Cardiac septum (tissue), 1 donor: ENCODE measurements at regions of chr17 and their contacts with region 1.

Region 1: DNA sequence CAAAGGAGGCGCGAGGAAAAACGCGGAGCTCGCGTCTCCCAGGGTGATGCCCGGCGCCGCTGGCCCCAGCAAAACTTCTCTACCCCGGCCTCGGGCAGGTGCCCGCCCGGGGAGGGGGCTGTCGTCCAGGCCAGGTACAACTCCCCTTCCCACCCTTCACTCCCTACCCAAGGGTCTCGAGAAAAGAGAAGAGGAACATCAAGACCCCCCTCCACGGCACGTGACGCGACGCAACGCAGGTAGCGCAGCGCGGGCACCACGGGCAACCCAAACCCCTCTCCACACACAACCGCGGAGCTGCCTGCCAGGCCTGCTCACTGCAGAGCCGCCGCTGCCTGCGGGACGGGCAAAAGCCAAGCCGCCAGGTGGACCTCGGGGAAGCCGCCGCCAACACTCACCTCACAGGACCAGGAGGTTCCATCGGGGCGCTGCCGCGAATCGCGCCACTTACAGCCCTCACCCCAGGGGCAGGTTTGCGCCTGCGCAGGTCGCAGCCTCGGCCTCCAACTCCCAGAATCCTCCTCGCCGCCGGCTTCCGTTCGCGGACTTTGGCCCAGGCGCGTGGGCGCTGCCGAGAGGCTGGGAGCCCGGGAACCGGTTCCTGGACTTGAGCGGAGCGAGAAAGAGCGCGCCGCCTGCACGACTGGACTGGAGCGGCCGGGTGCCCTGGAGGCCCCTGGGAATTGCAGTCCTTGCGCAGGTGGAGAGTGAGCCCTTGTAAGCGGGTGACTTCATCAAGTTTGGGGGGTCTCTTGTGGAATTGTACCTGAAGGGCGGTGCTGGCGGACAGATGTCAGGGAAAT is at the start of gene ZNF232:
- DNase-seq: peak; percentile 96
- total RNA-seq, gene ZNF232: 4.1 TPM

Region 2: DNA sequence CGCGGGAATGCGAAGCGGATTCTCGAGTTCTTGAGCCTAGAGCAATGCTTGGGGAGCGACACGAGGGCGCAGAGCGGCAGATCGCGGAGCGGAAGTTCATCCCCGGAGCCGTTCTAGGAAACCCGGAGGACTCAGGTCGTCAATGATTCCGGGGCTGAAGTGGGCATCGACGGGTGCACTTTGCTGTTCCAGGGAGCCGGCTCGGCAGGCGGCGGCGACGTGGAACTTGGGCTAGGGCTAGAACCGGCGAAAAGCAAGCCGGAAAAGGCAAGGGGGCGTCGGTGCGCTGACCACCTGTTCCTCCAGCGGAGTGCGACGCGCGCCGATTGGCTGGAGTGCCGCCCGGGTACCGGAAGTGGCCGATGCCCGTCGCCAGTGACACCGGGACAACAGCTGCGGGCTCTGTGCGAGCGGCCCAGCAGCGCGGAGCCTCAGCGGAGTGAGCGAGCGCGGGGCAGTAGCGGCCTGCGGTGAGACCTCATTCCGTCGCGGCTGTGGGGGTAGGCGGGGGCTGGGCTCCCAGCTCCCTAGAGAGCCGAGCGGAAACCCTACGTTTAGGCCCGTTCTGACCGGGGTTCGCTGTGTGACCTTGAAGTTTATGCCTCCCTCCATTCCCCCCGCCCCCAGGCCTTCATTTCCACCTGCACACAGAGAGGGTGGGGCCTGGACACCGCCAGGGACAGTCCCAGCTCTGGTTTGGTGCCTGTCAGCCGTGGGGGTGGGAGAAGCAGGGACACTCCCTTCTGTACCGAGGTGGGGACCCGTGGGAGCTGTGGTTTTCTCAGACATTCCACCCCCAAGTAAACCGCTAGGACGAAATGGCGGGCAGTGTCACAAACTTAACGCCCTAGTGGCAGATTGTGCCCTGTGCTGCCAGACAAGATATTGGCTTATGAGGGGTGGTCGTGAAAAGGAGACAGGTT is 33.2 kb before region 1 on chr17 and contains the start of gene ZFP3:
- intact Hi-C with region 1: loop called (anchors 2 kb)
- DNase-seq: peak; percentile 93
- total RNA-seq, gene ZFP3: 12.6 TPM

Region 3: DNA sequence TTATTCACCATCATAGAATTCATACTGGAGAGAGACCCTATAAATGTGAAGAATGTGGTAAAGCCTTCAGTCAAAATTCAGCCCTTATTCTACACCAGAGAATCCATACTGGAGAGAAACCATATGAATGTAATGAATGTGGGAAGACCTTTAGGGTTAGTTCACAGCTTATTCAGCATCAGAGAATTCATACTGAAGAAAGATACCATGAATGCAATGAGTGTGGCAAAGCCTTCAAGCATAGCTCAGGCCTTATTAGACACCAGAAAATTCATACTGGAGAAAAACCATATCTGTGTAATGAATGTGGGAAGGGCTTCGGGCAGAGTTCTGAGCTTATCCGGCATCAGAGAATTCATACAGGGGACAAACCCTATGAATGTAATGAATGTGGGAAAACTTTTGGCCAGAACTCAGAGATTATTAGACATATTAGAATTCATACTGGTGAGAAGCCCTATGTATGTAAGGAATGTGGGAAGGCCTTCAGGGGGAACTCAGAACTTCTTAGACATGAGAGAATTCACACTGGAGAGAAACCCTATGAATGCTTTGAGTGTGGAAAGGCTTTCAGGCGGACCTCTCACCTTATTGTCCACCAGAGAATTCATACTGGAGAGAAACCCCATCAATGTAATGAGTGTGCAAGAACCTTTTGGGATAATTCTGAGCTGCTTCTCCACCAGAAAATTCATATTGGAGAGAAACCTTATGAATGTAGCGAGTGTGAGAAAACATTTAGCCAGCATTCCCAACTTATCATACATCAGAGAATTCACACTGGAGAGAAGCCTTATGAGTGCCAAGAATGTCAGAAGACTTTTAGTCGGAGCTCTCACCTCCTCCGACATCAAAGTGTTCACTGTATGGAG is 19.2 kb before region 1 on chr17:
- intact Hi-C with region 1: no loop called
- DNase-seq: no peak

Region 4: DNA sequence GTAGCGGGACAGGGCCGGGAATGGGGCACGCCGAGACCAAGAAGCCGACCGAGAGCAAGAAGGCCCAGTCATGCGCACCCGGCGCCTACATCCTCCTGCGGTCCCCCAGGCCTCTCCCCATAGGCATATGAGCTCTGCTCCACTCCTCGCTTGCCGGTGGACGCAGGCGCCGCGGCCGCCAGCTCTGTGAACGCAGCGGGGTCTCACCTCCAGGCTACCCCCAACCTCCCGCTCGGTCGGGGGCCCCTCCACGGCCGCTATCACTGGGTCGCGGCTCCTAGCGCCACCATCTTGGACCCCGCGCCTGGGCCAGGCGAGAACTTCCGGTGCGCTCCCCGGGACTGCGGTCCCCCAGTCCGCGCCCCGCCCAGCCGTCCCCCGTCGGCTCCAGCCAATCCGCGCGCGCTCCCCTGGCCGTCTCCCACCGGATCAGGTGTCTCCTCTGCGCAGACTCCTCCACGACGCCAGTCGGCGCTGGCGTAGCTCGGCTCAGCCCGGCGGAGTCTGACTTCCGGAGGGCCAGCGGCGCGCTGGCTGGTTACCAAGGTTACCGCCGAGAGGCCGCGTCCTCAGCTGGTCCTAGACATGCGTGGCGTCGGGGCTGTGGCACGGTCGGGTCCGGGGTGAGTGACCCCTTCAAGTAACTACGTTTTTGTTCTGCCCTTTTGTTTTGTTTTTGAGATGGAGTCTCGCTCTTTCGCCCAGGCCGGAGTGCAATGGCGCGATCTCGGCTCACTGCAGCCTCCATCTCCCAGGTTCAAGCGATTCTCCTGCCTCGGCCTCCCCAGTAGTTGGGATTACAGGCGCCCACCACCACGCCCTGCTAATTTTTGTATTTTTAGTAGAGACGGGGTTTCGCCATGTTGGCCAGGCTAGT is 80.2 kb after region 1 on chr17 and contains the start of gene ZNF594:
- intact Hi-C with region 1: loop called (anchors 2 kb)
- DNase-seq: peak; percentile 97
- total RNA-seq, gene ZNF594: 5.8 TPM